Endothelial cell of umbilical vein (primary cell): ENCODE measurements at regions of chr4 and their contacts with region 1.

Region 1: DNA sequence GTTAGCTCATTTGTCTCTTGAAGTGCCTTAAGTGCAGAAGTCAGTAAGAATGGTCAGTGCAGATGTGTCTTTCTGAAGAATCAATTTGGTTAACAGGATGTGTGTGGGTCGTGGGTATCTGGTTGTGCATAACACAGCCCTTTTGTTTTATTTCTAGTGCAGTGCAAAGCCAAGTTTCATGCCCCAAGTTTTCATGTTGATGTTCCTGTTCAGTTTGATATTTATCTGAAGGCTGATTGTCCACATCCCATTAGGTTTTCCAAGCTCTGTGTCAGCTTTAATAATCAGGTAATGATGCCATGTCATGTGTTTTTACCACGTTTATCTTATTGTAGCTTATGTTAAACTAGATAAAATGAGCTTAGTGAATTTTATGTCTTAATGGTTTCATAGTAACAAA is 27.4 kb downstream of the TRAPPC11 start:
- DNase-seq: no peak
- H3K4me3 ChIP-seq: no peak overlapping the region
- H3K27ac ChIP-seq: no peak overlapping the region
- H3K4me1 ChIP-seq: no peaks in the 10 kb centered on the region
- H3K27me3 ChIP-seq: no peaks in the 10 kb centered on the region
- CTCF ChIP-seq: no peak
- POLR2A ChIP-seq: no peak

Region 2: DNA sequence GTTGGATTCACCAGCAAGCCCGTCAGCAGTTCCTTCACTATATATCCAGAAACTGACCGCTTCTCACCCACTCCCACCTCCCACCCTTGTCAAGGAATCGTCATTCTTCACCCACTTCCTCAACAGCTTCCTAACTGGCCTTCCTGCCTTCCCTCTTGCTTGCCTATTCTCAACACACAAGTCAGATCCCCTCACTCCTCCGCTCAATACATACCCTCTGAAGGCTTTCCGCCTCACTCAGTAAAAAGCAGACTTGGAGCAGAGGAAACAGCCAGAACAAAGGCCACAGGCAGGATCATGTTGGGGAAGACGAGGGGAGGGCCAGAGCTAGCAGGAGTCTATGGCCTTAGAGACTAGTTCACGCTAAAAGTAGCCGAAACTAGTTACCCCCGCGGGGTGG is 51.1 kb before region 1 on chr4:
- CTCF ChIA-PET with region 1: no interaction called
- POLR2A ChIA-PET with region 1: no interaction called
- dilution Hi-C with region 1: no loop called
- intact Hi-C with region 1: no loop called
- DNase-seq: no peak
- H3K4me3 ChIP-seq: no peak overlapping the region
- H3K27ac ChIP-seq: no peak overlapping the region
- H3K4me1 ChIP-seq: peaks cover 11% of the 10 kb centered on the region
- H3K27me3 ChIP-seq: no peaks in the 10 kb centered on the region
- CTCF ChIP-seq: no peak
- POLR2A ChIP-seq: no peak

Region 3: DNA sequence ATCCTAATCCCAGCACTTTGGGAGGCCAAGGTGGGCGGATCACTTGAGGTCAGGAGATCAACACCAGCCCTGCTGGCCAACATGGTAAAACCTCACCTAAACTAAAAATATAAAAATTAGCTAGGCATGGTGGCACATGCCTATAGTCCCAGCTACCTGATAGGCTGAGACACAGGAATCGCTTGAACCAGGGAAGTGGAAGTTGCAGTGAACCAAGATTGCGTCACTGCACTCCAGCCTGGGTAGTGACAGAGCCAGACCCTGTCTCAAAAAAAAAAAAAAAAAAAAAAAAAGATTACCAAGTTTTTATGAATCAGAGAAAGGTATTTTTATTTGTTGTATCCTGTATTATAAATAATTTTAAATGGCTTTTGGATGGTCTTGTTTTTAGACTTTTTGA is 12.3 kb before region 1 on chr4:
- CTCF ChIA-PET with region 1: interaction called, 4 read pairs
- POLR2A ChIA-PET with region 1: no interaction called
- dilution Hi-C with region 1: no loop called
- intact Hi-C with region 1: loop called (anchors 1 kb)
- DNase-seq: no peak
- H3K4me3 ChIP-seq: no peak overlapping the region
- H3K27ac ChIP-seq: no peak overlapping the region
- H3K4me1 ChIP-seq: no peaks in the 10 kb centered on the region
- H3K27me3 ChIP-seq: no peaks in the 10 kb centered on the region
- CTCF ChIP-seq: no peak
- POLR2A ChIP-seq: no peak